HCT116 (cell line): ENCODE measurements at regions of chr17 and their contacts with region 1.

Region 1: DNA sequence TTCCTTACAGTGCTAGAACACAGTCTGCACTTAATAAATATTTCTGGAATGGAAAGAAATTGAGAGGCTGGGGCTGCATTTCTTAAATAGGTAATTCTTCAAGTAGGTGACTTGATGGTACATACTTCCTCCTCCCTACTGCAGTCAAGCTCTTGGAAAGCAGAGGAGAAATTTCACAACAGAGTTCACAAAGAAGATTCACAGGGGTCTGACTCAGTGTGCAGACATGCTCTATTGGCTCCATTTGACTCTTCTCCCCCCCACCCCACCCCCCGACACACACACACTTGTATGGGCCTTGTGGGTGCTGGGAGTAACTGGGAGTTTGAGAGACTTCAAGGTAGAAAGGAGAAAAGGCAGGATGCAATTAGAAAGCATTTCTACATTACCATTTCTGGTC is 6.2 kb upstream of the MYOCD start:
- DNase-seq: no peak
- ATAC-seq: no peak
- H3K4me3 ChIP-seq: no peak overlapping the region
- H3K27ac ChIP-seq: no peak overlapping the region
- H3K4me1 ChIP-seq: no peaks in the 10 kb centered on the region
- H3K27me3 ChIP-seq: peaks cover 21% of the 10 kb centered on the region; the same call in 1 of the 2 replicates
- CTCF ChIP-seq: no peak
- POLR2A ChIP-seq: no peak
- RAD21 ChIP-seq: no peak

Region 2: DNA sequence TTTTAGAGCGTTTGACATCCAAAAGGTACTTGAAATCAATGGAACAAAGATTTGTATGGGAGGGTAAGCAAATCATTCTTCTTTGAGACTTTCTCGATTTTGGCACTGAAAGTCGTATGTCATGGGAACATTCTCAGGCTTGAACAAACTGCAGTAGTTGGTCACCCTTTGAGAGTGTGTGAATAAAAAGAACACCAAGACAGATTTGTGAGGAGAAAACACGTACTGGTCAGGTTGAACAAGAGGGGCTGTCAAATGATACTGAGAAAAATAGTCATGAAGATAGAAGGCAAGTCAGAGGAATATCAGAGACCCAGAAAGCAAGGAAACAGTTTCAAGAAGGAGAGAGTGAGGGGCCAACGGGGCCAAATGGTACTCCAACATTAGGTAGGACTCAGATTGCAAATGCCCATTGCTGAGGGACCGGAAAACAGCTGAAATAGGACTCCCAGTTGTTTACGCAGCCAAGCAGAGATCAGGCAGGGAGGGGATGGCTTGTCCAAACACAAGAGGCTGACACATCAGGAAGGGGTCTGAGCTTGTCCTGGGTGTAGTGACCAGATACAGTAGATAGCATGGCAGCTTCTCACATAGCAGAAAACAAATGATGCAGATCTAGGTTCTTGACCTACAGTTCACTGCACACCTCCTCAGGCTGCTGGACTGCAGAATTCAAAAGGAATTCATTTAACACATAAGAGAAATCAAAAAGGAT is 68.3 kb before region 1 on chr17:
- CTCF ChIA-PET with region 1: no interaction called
- POLR2A ChIA-PET with region 1: no interaction called
- RAD21 ChIA-PET with region 1: no interaction called
- intact Hi-C with region 1: loop called (anchors 10 kb)
- DNase-seq: no peak
- ATAC-seq: no peak
- H3K4me3 ChIP-seq: no peak overlapping the region
- H3K27ac ChIP-seq: no peak overlapping the region
- H3K4me1 ChIP-seq: no peaks in the 10 kb centered on the region
- H3K27me3 ChIP-seq: peaks cover 22% of the 10 kb centered on the region
- CTCF ChIP-seq: no peak
- POLR2A ChIP-seq: no peak
- RAD21 ChIP-seq: no peak